Activated CD4-positive, alpha-beta T cell treated with anti-CD3 and anti-CD28 coated beads, Interleukin-2, amount 10 ng/mL, durations not matched to agents 24 days and 14 days (primary cell): ENCODE measurements at regions of chr15 and their contacts with region 1.

Region 1: GRCh38 chr15:74995241-74995778 is at the start of gene SCAMP5:
- DNase-seq: peak; percentile 99
- H3K4me3 Mint-ChIP-seq: peak within 1 kb of the TSS; percentile 61
- H3K27ac Mint-ChIP-seq: peak within 1 kb of the TSS; percentile 16
- H3K4me1 Mint-ChIP-seq: peaks cover 13% of the 10 kb centered on the region
- H3K27me3 Mint-ChIP-seq: peaks cover 41% of the 10 kb centered on the region
- total RNA-seq, gene SCAMP5: 0.92 and 1.3 TPM in 2 replicates

Region 2: DNA sequence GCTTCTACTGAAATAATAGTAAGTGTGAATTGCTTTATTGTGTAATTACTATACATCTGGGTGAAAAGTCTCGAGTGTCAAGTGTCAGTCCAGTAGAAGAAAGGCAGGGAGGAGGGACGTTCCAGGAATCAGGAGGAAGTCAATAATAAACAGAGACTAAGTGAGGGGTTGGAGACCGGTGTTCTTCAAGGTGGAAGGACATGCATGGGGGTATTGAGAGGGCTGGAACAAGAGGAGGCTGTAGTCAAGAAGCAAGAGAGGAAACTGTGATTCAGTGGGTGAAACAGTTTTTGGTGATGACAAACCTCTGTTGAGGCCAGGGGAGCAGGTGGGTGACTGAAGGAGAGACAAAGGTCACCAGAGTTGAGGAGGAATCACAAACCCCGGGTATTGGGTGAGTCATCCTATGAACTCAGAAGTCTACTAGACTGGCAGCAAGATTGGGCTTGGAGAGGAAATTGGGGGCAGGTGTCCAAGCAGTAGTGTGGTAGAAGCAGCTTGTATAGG is 11.5 kb before region 1 on chr15:
- intact Hi-C with region 1: loop called (anchors 1 kb)
- DNase-seq: peak; percentile 67
- H3K4me3 Mint-ChIP-seq: peak overlapping the region; percentile 5
- H3K27ac Mint-ChIP-seq: peak overlapping the region; percentile 67
- H3K4me1 Mint-ChIP-seq: peaks cover 7% of the 10 kb centered on the region
- H3K27me3 Mint-ChIP-seq: peaks cover 10% of the 10 kb centered on the region